Mammary epithelial cell (primary cell): ENCODE measurements at regions of chr11 and their contacts with region 1.

Region 1: DNA sequence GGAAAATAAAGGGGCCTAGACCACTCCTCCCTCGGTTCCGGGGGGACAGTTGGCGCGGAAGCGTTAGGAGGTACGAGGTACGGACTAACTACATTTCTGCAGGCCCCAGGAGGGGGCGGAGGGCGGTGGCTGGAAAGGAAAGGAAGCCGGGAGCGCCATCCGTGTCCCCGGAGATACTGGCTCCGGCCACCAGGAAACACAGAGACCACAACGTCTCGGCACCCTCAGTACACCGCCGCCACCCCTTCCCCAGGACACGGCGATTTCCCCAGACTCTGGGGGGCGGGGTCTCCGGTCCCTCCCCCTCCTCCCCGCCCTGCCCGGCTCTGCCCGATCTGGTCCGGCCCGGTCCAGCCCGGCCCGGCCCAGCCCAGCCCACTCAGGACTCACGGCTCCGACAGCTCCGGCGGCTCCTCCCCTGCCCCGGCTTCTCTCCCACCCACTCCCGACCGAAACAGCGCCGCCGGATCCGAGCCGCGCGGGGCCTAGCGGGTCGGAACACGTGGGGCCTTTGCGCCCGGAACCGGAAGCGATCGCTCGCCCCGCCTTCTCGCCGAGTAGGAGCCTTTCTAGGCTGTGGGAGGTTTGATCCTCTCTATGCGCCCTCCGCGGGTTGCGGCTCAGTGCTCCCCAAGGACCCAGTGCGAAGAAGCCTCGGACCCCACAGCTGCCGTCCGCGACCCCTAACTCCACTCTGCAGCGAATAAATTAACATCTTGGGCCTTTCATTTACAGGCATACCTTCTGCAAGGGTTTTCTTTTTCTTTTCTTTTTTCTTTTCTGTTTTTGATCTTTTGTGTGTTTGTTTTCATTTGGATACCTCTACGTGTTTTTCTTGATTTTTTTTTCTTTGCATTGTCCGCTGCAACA is at the start of gene ZNF202:
- DNase-seq: peak; percentile 84
- H3K4me3 ChIP-seq: peak within 1 kb of the TSS; percentile 84 to 98 (median 91)
- H3K27ac ChIP-seq: peak within 1 kb of the TSS; percentile 49
- H3K4me1 ChIP-seq: peaks cover 15% of the 10 kb centered on the region
- H3K27me3 ChIP-seq: no peaks in the 10 kb centered on the region
- CTCF ChIP-seq: peak in 1 of 2 donors; percentile 31
- total RNA-seq, gene ZNF202: 6.7 to 19.3 TPM

Region 2: GRCh38 chr11:123806249-123806648 is 64.9 kb after region 1 on chr11 and contains the start of gene OR6M1:
- CTCF ChIA-PET with region 1: no interaction called
- dilution Hi-C with region 1: no loop called
- in situ Hi-C with region 1: no loop called
- intact Hi-C with region 1: no loop called
- DNase-seq: no peak
- H3K4me3 ChIP-seq: no peak within 1 kb of the TSS
- H3K27ac ChIP-seq: no peak within 1 kb of the TSS
- H3K4me1 ChIP-seq: no peaks in the 10 kb centered on the region
- H3K27me3 ChIP-seq: no peaks in the 10 kb centered on the region
- CTCF ChIP-seq: no peak
- total RNA-seq, gene OR6M1: not detected

Region 3: DNA sequence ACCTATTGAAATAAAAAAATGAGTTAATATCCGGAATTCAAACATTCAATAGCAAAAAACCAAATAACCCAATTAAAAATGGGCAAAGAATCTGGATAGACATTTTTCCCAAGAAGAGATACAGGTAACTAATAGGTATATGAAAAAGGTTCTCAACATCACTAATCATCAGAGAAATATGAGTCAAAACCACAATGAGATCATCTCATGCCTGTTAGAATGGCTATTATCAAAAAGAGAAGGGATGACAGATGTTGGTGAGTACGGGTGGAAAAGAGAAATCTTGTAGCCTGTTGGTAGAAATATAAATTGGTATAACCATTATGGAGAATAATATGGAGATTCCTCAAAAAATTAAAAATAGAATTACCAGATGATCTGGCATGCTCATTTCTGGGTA is 91.7 kb after region 1 on chr11:
- CTCF ChIA-PET with region 1: no interaction called
- dilution Hi-C with region 1: no loop called
- in situ Hi-C with region 1: no loop called
- intact Hi-C with region 1: no loop called
- DNase-seq: peak; percentile 63
- H3K4me3 ChIP-seq: no peak overlapping the region
- H3K27ac ChIP-seq: no peak overlapping the region
- H3K4me1 ChIP-seq: no peaks in the 10 kb centered on the region
- H3K27me3 ChIP-seq: peaks cover 3% of the 10 kb centered on the region
- CTCF ChIP-seq: no peak

Region 4: GRCh38 chr11:123973816-123974215 is 232.4 kb after region 1 on chr11:
- CTCF ChIA-PET with region 1: no interaction called
- dilution Hi-C with region 1: no loop called
- in situ Hi-C with region 1: no loop called
- intact Hi-C with region 1: loop called (anchors 2 kb)
- DNase-seq: peak; percentile 93
- H3K4me3 ChIP-seq: no peak overlapping the region
- H3K27ac ChIP-seq: peak overlapping the region; percentile 98
- H3K4me1 ChIP-seq: peaks cover 42% of the 10 kb centered on the region
- H3K27me3 ChIP-seq: no peaks in the 10 kb centered on the region
- CTCF ChIP-seq: no peak